CD8-positive, alpha-beta memory T cell (primary cell): ENCODE measurements at regions of chr5 and their contacts with region 1.

Region 1: DNA sequence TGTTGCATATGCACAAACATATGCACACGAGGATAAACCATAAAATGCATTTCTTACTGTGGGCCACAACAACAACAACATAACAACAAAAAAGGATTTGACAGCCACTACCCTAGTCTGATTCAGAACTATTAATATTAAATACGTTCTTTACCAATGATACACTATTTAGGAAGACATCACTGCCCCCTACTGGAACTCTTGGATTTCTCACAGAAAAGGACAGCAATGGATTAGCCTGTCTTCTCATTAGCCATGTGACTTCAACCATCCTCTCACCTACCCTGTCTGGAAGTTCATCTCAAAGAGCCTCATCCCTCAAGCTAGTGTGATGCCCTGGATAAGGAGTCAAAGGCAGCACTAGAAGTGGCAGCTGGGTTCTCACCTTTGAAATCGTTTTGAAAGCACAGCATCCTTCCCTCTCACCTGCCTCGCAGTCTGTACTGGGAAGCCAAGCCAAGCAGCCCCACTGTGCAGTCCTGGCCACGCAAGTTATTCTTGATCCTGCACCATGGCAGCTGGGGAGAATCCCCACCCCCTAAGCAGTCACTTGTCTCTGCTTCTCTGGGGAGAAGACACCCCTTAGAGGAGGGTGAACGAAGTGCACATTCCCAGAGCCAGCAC is 64.6 kb downstream of the SH3TC2 start:
- DNase-seq: peak in 3 of 5 donors; percentile 21 to 39 (median 28)
- H3K4me3 ChIP-seq: no peak overlapping the region
- H3K4me3 Mint-ChIP-seq: no peak overlapping the region
- H3K27ac ChIP-seq: no peak overlapping the region
- H3K27ac Mint-ChIP-seq: no peak overlapping the region
- H3K4me1 ChIP-seq: no peaks in the 10 kb centered on the region
- H3K4me1 Mint-ChIP-seq: peaks cover 0 to 4% (median 1%) of the 10 kb centered on the region in 3 donors
- H3K27me3 ChIP-seq: peaks cover 6% of the 10 kb centered on the region
- H3K27me3 Mint-ChIP-seq: peaks cover 4 to 28% of the 10 kb centered on the region in 2 donors

Region 2: DNA sequence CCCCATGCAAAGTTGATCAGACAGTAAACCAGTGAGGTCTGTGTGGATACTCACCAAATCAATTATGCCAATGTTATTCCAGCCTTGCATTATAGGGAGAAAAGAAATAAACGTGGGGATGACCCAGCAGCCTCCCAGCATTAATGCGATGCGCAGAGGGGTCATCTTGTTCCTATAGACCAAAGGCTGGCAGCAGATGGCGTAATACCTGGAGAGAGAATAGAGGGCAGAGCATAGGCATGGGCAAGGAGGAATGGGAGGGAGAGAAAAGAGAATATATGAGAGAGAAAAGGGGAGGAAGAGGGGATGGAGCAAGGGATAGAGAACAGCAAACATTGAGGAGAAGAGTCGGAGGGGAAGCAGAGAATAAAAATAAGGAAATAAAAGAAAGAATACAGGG is 475.1 kb before region 1 on chr5:
- CTCF ChIA-PET with region 1: no interaction called
- POLR2A ChIA-PET with region 1: no interaction called
- DNase-seq: no peak
- H3K4me3 ChIP-seq: no peak overlapping the region
- H3K4me3 Mint-ChIP-seq: no peak overlapping the region
- H3K27ac ChIP-seq: no peak overlapping the region
- H3K27ac Mint-ChIP-seq: no peak overlapping the region
- H3K4me1 ChIP-seq: no peaks in the 10 kb centered on the region
- H3K4me1 Mint-ChIP-seq: no peaks in the 10 kb centered on the region
- H3K27me3 ChIP-seq: no peaks in the 10 kb centered on the region
- H3K27me3 Mint-ChIP-seq: peaks cover 3 to 43% of the 10 kb centered on the region in 2 donors

Region 3: GRCh38 chr5:148740966-148741742 is 257.1 kb before region 1 on chr5:
- CTCF ChIA-PET with region 1: interaction called, 108 read pairs
- POLR2A ChIA-PET with region 1: no interaction called
- DNase-seq: peak in 2 of 5 donors; percentile 16 to 27
- H3K4me3 ChIP-seq: no peak overlapping the region
- H3K4me3 Mint-ChIP-seq: no peak overlapping the region
- H3K27ac ChIP-seq: no peak overlapping the region
- H3K27ac Mint-ChIP-seq: no peak overlapping the region
- H3K4me1 ChIP-seq: no peaks in the 10 kb centered on the region
- H3K4me1 Mint-ChIP-seq: no peaks in the 10 kb centered on the region
- H3K27me3 ChIP-seq: no peaks in the 10 kb centered on the region
- H3K27me3 Mint-ChIP-seq: peaks cover 11 to 30% of the 10 kb centered on the region in 2 donors